Activated T-helper 1 cell treated with anti-CD3 and anti-CD28 coated beads, Interleukin-12 subunit alpha, Interleukin-12 subunit beta, Interleukin-2, Interleukin-4 antibody, amounts not matched to agents 30 ng/mL and 10 ng/mL and 1 ng/mL, durations not matched to agents 14 hours and 24 hours and 36 hours (primary cell): ENCODE measurements at regions of chr3 and their contacts with region 1.

Region 1: DNA sequence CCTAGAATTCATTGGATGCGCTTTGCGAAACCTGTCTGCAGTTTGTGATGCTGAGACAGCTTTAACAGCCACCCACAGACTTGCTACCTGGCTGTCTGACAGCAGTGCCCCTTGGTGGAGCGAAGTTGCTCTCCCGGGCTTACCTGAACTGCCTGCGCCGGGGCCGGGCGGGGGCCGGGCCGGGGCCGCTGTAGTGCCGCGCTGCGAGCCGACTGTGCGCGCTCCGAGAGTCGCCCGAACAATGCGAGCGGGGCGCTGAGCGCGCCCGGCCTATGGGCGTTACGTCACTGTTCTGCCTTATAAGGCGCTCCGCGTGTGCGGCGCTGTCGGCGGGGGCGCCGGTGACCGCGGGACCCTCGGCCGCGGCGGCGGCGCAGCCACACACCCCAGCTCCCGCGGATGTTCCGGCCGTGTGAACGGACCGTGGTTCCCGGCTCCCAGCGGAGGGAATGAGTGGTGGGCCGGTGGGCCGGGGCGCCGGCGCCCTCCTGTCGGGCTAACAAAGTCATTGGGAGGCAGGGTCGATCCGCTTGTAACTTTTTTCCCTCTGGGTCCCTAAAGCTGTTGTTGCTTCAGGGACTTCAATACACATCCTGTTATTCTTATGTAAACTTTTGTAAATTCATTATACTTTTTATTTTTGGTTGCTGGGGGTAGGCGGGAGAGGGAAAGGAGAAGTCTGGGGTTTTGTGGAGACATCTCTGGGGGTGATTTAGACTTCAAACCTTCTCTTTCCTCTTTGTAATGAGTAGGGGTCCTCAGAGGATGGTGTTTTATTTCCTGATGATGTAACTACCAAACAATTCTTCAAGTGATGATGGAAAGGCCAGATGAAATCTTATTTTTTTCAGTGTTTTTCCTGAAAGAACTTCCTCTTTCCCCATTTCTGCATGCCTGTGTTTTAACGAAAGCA is 58.5 kb downstream of the CMSS1 start:
- DNase-seq: peak; percentile 66
- H3K4me3 Mint-ChIP-seq: peak overlapping the region; percentile 82
- H3K27ac Mint-ChIP-seq: no peak overlapping the region
- H3K4me1 Mint-ChIP-seq: peaks cover 53% of the 10 kb centered on the region
- H3K27me3 Mint-ChIP-seq: peaks cover 14% of the 10 kb centered on the region

Region 2: GRCh38 chr3:98563661-98564281 is 1312.4 kb before region 1 on chr3:
- intact Hi-C with region 1: loop called (anchors 10 kb)
- DNase-seq: no peak
- H3K4me3 Mint-ChIP-seq: peak overlapping the region; percentile 47
- H3K27ac Mint-ChIP-seq: peak overlapping the region; percentile 53
- H3K4me1 Mint-ChIP-seq: peaks cover 94% of the 10 kb centered on the region
- H3K27me3 Mint-ChIP-seq: no peaks in the 10 kb centered on the region

Region 3: GRCh38 chr3:99859825-99860224 is 16.4 kb before region 1 on chr3:
- intact Hi-C with region 1: loop called (anchors 1 kb)
- DNase-seq: no peak
- H3K4me3 Mint-ChIP-seq: no peak overlapping the region
- H3K27ac Mint-ChIP-seq: no peak overlapping the region
- H3K4me1 Mint-ChIP-seq: peaks cover 72% of the 10 kb centered on the region
- H3K27me3 Mint-ChIP-seq: peaks cover 3% of the 10 kb centered on the region

Region 4: DNA sequence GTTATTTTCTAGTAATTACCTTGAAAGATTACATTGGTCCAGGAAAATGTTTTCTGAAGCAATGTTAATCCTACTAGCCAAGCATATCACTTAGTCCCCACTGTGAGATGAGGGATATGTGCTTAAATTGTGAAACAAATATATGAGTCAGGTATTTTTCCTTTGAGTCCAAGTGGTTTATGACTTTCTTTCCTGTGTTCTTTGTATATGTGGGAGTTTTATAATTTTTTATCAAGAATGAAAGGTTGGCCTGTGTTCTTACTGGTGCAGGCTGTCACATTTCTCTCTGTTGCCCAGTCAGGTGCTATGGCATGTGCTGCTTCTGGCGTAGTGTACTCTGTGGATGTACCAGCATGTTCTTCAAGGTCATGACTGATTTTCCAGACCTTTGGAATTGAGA is 88.9 kb after region 1 on chr3:
- intact Hi-C with region 1: loop called (anchors 5 kb)
- DNase-seq: no peak
- H3K4me3 Mint-ChIP-seq: no peak overlapping the region
- H3K27ac Mint-ChIP-seq: no peak overlapping the region
- H3K4me1 Mint-ChIP-seq: peaks cover 30% of the 10 kb centered on the region
- H3K27me3 Mint-ChIP-seq: no peaks in the 10 kb centered on the region